Panc1 (cell line): ENCODE measurements at regions of chr4 and their contacts with region 1.

Region 1: DNA sequence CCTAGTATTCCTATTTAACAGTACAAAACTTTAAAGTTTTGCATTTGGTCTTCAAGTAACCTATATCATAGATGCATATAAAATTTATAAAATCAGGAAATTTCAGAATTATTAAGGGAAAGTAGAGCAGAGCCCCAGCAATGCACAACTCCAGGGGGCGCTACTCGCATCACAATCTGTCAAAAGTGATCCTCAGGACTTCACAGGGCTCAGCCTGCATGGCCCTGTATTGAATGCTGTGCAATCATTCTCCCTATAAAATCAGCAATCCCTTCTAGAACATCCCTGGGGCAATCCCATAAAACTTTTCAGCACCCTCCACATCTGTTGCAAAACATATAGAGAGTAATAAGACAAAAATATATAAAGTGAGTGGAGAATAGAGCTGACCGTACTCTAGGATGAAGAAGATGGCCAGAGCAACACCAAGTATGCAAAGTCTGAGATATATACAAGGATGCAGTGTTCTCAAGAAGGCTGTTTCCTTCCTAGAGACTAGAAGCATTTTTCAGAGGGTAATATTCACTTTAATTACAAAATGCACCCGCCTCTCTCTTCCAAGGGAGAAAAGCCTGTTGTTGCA is 12.5 kb upstream of the PPARGC1A start:
- DNase-seq: no peak
- ATAC-seq: no peak
- H3K4me3 ChIP-seq: no peak overlapping the region
- H3K27ac ChIP-seq: no peak overlapping the region
- H3K4me1 ChIP-seq: no peaks in the 10 kb centered on the region
- H3K27me3 ChIP-seq: no peaks in the 10 kb centered on the region
- CTCF ChIP-seq: peak; percentile 16; the same call in 1 of the 2 replicates

Region 2: GRCh38 chr4:23929248-23929647 is 26.9 kb after region 1 on chr4:
- CTCF ChIA-PET with region 1: no interaction called
- POLR2A ChIA-PET with region 1: interaction called, 13 read pairs
- in situ Hi-C with region 1: no loop called
- intact Hi-C with region 1: no loop called
- DNase-seq: no peak
- ATAC-seq: no peak
- H3K4me3 ChIP-seq: no peak overlapping the region
- H3K27ac ChIP-seq: no peak overlapping the region
- H3K4me1 ChIP-seq: no peaks in the 10 kb centered on the region
- H3K27me3 ChIP-seq: no peaks in the 10 kb centered on the region
- CTCF ChIP-seq: no peak